ENCODE measurements at regions of chr1 and their contacts with region 1.

Region 1: GRCh38 chr1:110495926-110496600 is 22.9 kb downstream of the KCNA10 start:
- DNase-seq: peak; percentile 89
- H3K4me3 Mint-ChIP-seq: no peak overlapping the region
- H3K27ac Mint-ChIP-seq: no peak overlapping the region
- H3K4me1 Mint-ChIP-seq: peaks cover 7% of the 10 kb centered on the region
- H3K27me3 Mint-ChIP-seq: peaks cover 10% of the 10 kb centered on the region

Region 2: DNA sequence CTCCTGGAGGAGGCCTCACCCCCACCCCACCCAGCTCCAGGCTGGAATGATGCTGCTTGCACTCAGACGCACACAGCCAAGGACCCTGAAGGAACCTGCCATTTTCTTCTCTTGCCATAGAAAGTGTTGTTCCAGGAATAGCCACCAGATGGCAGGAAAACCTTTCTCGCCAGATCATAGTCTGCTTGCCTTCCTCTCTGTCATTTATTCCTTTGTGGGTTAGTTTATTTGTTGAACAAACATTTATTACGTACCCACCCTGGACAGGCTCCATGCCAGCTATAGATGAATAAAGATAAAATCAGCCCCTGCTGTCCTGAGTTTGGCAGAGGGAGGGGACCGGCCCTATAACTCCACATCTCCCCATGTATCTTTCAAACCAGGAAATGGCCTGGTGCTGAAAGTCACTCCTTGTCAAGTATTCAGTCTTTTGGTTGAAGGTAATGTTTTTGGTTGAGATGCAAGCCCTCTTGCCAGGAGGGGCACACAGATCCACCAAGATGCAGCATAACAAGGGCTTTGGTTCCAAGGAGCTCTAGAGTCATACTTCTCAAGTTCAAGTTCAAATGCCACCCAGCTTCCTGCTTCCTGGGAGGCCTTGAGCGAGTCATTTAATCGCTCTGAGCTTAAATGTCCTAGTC is 292.9 kb before region 1 on chr1:
- CTCF ChIA-PET with region 1: interaction called, 60 read pairs
- DNase-seq: peak; percentile 81
- H3K4me3 Mint-ChIP-seq: no peak overlapping the region
- H3K27ac Mint-ChIP-seq: peak overlapping the region; percentile 82
- H3K4me1 Mint-ChIP-seq: peaks cover 27% of the 10 kb centered on the region
- H3K27me3 Mint-ChIP-seq: no peaks in the 10 kb centered on the region

Region 3: GRCh38 chr1:110312188-110313121 is 183.6 kb before region 1 on chr1:
- CTCF ChIA-PET with region 1: interaction called, 13 read pairs
- DNase-seq: peak; percentile 82
- H3K4me3 Mint-ChIP-seq: no peak overlapping the region
- H3K27ac Mint-ChIP-seq: no peak overlapping the region
- H3K4me1 Mint-ChIP-seq: no peaks in the 10 kb centered on the region
- H3K27me3 Mint-ChIP-seq: no peaks in the 10 kb centered on the region

Region 4: GRCh38 chr1:110460253-110461220 is 35.5 kb before region 1 on chr1:
- CTCF ChIA-PET with region 1: interaction called, 46 read pairs
- DNase-seq: peak; percentile 89
- H3K4me3 Mint-ChIP-seq: no peak overlapping the region
- H3K27ac Mint-ChIP-seq: no peak overlapping the region
- H3K4me1 Mint-ChIP-seq: no peaks in the 10 kb centered on the region
- H3K27me3 Mint-ChIP-seq: peaks cover 11% of the 10 kb centered on the region

Region 5: DNA sequence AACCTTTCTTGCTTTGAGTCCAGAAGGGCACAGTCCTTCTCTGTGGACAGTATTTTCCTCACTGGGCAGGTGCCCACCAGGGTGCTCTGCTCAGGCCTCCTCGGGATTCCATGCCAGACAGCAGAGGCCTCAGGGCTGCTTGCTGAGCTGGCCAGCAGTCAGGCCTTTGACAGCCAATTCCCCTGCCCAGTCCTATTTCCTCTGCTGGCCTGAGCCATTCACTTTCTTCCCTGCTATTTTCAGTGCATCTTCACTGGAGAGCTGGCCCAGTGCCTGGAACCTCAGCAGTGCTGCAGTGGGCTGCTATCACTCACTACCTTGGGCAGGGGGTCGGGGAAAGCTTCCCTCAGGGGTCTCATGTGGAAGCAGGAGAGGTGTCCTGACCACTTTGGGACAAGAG is 10.3 kb before region 1 on chr1:
- CTCF ChIA-PET with region 1: interaction called, 57 read pairs
- DNase-seq: no peak
- H3K4me3 Mint-ChIP-seq: no peak overlapping the region
- H3K27ac Mint-ChIP-seq: no peak overlapping the region
- H3K4me1 Mint-ChIP-seq: no peaks in the 10 kb centered on the region
- H3K27me3 Mint-ChIP-seq: peaks cover 45% of the 10 kb centered on the region

Region 6: DNA sequence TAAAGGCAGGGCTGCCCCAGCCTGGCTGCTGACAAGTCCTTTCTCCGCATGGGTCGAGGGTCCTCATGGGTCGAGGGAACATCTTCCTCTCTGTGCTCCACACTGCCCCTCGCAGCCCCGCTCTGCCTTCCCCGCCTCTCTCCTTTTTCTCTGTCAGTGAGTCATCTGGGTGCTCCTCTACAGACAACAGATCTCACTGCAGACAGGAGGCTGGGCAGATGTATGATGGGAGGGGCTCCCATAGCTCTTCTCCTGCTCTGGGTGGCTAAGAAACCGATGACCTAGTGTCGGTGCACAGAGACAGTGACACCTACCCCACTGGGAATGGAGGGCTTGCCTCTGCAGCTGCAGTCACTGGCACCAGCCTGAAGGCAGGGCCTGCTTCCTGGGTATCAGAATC is 17.4 kb after region 1 on chr1:
- CTCF ChIA-PET with region 1: interaction called, 22 read pairs
- DNase-seq: no peak
- H3K4me3 Mint-ChIP-seq: no peak overlapping the region
- H3K27ac Mint-ChIP-seq: no peak overlapping the region
- H3K4me1 Mint-ChIP-seq: no peaks in the 10 kb centered on the region
- H3K27me3 Mint-ChIP-seq: peaks cover 24% of the 10 kb centered on the region